Dendritic cell treated with granulocyte-macrophage colony-stimulating factor and Interleukin-4, amounts not matched to agents 40 ng/mL and 50 ng/mL, for 4 days (primary cell): ENCODE measurements at regions of chr2 and their contacts with region 1.

Region 1: DNA sequence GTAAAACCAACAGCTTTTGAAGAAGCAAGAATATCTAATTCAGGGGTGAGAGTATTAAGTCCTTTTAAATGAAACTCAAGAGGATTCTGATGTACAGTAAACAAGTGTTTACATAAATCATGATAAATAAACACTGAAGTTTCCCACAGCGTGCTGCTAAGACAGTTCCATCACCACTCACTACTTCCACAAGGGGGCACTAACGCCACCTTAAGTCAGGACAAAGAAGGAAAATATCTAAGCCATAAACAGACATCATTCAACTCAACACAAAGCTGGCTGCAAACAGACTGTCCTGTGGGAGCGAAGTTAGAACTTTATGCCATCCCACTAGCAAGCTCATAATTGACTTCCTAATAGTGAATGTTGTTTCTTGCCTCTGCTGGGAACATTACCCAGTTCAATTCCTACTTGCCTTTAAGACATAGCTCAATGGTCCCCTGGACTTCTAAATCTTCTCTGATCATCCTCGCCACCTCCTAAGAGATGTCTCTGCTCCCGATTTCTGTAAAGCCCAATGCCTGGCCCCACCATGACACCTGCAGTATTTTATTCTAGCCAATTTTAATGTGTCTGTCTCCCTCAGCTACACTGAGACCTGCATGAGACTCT is 36.5 kb downstream of the MRPL44 start:
- H3K4me3 Mint-ChIP-seq: no peak overlapping the region
- H3K27ac Mint-ChIP-seq: no peak overlapping the region
- H3K4me1 Mint-ChIP-seq: no peaks in the 10 kb centered on the region
- H3K27me3 Mint-ChIP-seq: no peaks in the 10 kb centered on the region

Region 2: DNA sequence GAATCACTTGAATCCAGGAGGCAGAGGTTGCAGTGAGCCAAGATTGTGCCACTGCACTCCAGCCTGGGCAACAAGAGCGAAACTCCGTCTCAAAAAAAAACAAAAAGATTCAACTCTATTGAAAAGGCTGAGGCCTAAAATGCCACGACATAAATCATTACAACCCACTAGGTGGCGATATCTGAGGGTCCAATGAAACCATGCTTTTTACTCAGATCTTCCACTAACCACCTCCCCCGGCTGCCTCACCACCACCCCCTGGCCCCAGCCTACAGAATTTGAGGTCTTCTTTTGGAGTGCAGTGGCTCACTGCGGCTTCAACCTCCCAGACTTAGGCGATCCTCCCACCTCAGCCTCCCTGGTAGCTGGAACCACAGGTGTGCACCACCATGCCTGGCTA is 213.8 kb before region 1 on chr2:
- intact Hi-C with region 1: loop called (anchors 5 kb)
- H3K4me3 Mint-ChIP-seq: no peak overlapping the region
- H3K27ac Mint-ChIP-seq: no peak overlapping the region
- H3K4me1 Mint-ChIP-seq: no peaks in the 10 kb centered on the region
- H3K27me3 Mint-ChIP-seq: no peaks in the 10 kb centered on the region

Region 3: GRCh38 chr2:224039124-224039940 is 45.6 kb after region 1 on chr2 and contains the start of gene SERPINE2:
- intact Hi-C with region 1: no loop called
- H3K4me3 Mint-ChIP-seq: peak within 1 kb of the TSS; percentile 80
- H3K27ac Mint-ChIP-seq: no peak within 1 kb of the TSS
- H3K4me1 Mint-ChIP-seq: peaks cover 13% of the 10 kb centered on the region
- H3K27me3 Mint-ChIP-seq: peaks cover 67% of the 10 kb centered on the region

Region 4: DNA sequence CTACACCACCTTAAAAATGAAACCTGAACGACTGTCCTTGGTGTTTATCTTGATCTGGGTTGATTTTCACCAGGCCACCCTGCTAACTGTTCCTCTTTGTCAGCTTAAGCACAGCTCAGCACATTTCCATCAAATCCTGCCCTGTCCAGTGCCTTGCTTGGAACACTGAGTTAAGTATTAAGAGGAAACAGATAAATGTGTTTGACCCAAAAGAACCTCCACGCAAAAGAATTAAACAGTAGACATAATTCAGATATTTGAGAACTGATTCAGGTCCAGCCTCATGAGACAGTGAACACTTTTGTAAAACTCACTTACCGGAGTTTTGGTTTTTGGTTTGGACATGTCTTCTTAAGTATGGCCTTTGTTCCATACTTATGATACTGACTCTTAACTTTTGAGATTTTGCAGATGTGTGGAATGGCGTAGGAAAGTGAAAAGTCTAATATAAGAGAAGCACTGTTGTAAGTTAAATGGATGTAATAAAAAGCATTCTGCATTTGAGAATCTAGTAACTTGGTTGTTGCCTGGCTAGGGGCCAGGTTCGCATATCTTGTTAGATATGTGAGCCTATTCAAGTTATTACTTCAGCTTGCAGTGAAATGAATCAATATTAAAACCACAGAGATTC is 134.3 kb after region 1 on chr2:
- intact Hi-C with region 1: no loop called
- H3K4me3 Mint-ChIP-seq: no peak overlapping the region
- H3K27ac Mint-ChIP-seq: no peak overlapping the region
- H3K4me1 Mint-ChIP-seq: no peaks in the 10 kb centered on the region
- H3K27me3 Mint-ChIP-seq: no peaks in the 10 kb centered on the region

Region 5: GRCh38 chr2:224142397-224143312 is 148.9 kb after region 1 on chr2:
- intact Hi-C with region 1: loop called (anchors 5 kb)
- H3K4me3 Mint-ChIP-seq: no peak overlapping the region
- H3K27ac Mint-ChIP-seq: no peak overlapping the region
- H3K4me1 Mint-ChIP-seq: no peaks in the 10 kb centered on the region
- H3K27me3 Mint-ChIP-seq: peaks cover 1% of the 10 kb centered on the region

Region 6: DNA sequence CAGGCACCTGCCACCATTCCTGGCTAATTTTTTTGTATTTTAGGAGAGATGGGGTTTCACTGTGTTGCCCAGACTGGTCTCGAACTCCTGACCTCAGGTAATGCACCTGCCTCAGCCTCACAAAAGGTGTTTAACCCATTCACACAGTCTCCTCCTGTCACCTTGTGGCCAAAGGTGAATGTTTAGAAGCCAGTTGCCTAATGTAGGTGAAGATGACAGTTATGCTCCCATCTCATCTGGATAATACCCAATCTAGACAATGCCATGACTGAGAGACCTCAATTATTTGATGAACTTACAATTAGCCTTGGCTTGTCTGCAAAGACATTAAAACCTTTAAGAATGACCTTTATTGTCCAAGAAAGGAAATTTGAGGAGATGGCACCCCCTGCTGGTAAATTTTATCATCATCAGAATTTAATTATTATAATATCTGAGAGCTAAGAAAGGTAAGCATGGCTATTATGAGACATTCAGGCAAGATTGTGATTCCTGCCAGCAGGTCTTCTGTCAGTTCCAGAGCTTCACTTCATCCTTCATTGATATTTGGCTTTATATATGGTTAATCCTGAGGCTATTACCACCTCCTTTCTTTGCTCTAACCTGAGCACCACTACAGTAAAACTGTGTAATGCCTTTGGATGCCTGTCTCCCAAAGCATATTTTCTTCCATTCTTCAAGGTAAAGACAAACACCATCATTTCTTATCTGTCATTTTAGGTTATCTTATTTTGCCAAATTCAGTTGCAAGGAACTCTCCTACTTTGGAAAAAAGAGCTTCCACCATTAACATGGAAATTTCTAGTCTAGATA is 290.6 kb after region 1 on chr2:
- intact Hi-C with region 1: loop called (anchors 1 kb)
- H3K4me3 Mint-ChIP-seq: no peak overlapping the region
- H3K27ac Mint-ChIP-seq: no peak overlapping the region
- H3K4me1 Mint-ChIP-seq: no peaks in the 10 kb centered on the region
- H3K27me3 Mint-ChIP-seq: peaks cover 7% of the 10 kb centered on the region

Region 7: GRCh38 chr2:225650041-225650440 is 1656.3 kb after region 1 on chr2:
- intact Hi-C with region 1: loop called (anchors 10 kb)
- H3K4me3 Mint-ChIP-seq: no peak overlapping the region
- H3K27ac Mint-ChIP-seq: no peak overlapping the region
- H3K4me1 Mint-ChIP-seq: no peaks in the 10 kb centered on the region
- H3K27me3 Mint-ChIP-seq: no peaks in the 10 kb centered on the region